Calu3 (cell line): ENCODE measurements at regions of chr1 and their contacts with region 1.

Region 1: GRCh38 chr1:175933801-175934200 is 190.4 kb upstream of the TNR start:
- DNase-seq: no peak
- H3K4me3 Mint-ChIP-seq: no peak overlapping the region
- H3K27ac Mint-ChIP-seq: no peak overlapping the region
- H3K4me1 Mint-ChIP-seq: no peaks in the 10 kb centered on the region
- H3K27me3 Mint-ChIP-seq: no peaks in the 10 kb centered on the region
- CTCF ChIP-seq: no peak

Region 2: DNA sequence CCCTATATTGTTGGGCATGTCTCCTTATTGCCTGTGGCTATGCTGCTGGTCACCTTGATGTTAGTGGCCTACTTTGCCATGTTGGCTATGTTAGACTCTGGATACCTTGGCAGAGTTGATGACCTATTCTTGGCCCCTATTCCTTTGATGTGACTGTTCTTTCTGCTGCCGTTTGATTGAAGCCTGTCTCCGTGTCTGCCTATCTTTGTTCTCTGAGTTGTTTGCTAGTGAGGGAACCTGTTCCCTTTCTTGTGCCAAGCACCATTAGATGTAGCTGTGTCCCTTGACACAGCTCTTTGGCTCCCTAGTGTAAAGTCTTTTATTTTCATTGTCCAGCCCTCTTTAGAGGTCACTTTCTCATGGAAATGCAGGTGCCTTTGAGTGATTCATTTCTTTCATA is 500.4 kb after region 1 on chr1:
- CTCF ChIA-PET with region 1: interaction called, 10 read pairs
- intact Hi-C with region 1: no loop called
- DNase-seq: no peak
- H3K4me3 Mint-ChIP-seq: no peak overlapping the region
- H3K27ac Mint-ChIP-seq: no peak overlapping the region
- H3K4me1 Mint-ChIP-seq: no peaks in the 10 kb centered on the region
- H3K27me3 Mint-ChIP-seq: peaks cover 13% of the 10 kb centered on the region
- CTCF ChIP-seq: no peak